HEK293 (cell line): ENCODE measurements at regions of chrX and their contacts with region 1.

Region 1: GRCh38 chrX:68732906-68733493 is 85.5 kb downstream of the STARD8 start:
- H3K4me3 ChIP-seq: no peak overlapping the region
- H3K27ac ChIP-seq: no peak overlapping the region
- H3K4me1 ChIP-seq: no peaks in the 10 kb centered on the region
- CTCF ChIP-seq: peak; percentile 83

Region 2: DNA sequence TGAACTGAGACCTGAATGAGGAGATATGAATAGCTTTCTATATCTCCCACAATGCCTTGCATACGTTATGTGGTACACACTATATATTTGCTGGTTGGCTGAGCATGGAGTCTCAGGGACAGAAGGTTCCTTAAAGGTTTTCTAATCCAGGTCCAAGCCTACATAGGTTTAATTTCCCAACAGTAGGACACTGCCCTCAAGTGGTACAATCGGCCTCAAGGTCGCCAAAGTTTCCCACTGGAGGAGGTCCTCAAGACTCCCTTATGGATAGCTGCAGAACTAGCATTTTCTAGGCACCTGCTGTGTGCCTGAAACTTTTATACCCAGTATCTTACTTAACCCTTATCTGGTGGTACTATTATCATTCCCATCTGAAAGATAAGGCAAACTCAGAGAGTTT is 74.8 kb after region 1 on chrX:
- CTCF ChIA-PET with region 1: interaction called, 62 read pairs
- POLR2A ChIA-PET with region 1: no interaction called
- H3K4me3 ChIP-seq: no peak overlapping the region
- H3K27ac ChIP-seq: no peak overlapping the region
- H3K4me1 ChIP-seq: no peaks in the 10 kb centered on the region
- CTCF ChIP-seq: no peak

Region 3: DNA sequence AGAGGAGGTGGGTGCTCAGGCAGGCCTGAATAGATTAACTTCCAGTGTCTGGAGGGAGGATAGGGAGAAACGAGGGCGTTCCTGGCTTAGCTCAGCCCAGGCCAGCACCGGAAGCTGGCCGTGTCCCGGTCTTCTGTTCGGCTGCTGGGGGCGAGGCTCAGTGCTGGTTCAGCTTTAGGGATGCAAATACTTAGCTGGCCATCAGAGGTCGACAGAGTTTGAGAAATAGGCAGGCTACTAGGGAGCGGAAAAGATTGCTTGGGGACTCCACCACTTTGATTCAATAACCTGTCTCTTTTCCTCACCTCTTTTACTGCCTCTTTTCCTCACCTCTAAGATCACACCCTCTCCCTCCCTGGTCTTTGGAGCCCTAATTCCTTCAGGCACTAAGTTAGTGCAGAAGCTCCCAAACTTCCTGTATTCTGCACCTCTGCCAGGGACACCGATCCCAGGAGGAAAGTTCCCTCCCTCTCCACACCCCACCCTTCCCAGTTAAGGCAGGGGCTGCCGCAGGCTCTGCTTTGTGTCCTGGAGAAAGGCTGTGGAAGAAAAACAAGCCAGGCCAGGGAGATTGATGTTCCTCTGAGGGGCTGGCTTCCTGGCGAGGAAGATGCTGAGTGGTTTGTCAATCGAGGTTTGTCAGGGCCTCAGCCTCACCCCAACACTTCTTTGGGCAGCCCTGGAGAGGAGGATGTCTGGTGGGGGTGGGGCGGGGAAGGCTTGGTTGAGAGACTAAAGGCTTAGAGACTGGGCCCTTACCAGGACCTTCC is 89.8 kb after region 1 on chrX:
- CTCF ChIA-PET with region 1: interaction called, 18 read pairs
- POLR2A ChIA-PET with region 1: interaction called, 4 read pairs
- H3K4me3 ChIP-seq: no peak overlapping the region
- H3K27ac ChIP-seq: no peak overlapping the region
- H3K4me1 ChIP-seq: no peaks in the 10 kb centered on the region
- CTCF ChIP-seq: peak; percentile 90